Activated T-helper 1 cell treated with anti-CD3 and anti-CD28 coated beads, Interleukin-12 subunit alpha, Interleukin-12 subunit beta, Interleukin-2, Interleukin-4 antibody, amounts not matched to agents 30 ng/mL and 10 ng/mL and 1 ng/mL, durations not matched to agents 14 hours and 24 hours and 36 hours (primary cell): ENCODE measurements at regions of chr14 and their contacts with region 1.

Region 1: DNA sequence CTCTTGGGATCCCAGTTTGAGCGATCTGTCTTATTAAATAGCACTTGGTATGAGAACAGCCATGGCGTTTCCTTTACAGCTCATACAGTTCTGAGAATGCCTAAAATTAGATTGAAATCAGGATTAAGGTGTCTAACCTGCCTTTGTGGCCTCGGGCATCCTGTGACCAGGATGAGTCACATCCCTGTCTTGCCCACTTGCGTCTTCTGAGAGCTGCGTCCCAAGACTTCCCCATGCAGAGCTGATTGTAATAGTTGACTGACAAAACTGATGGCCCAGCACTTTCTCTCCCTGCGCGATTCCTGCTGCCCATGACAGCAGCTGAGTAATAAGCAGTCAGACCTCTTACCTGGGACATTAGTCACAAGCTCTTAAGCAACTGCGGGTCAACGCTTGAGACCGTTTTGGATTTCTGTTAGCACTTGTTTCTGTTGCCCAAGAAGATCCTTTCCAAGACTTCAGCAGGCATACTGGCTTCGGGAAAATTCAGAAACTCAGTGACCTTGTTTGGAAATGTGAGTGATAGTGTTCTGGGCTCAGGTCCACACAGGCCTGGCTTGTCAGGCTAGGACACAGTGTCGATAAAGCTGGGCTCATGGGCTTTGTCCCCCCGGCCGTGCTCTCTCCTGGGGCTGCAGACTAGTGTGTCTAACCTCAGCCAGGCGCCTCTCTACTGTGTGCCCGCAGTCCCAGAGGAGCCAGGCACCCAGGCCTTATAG is 169.9 kb upstream of the HIF1A start:
- DNase-seq: peak; percentile 65
- H3K4me3 Mint-ChIP-seq: peak overlapping the region; percentile 64
- H3K27ac Mint-ChIP-seq: peak overlapping the region; percentile 89
- H3K4me1 Mint-ChIP-seq: peaks cover 82% of the 10 kb centered on the region
- H3K27me3 Mint-ChIP-seq: no peaks in the 10 kb centered on the region

Region 2: DNA sequence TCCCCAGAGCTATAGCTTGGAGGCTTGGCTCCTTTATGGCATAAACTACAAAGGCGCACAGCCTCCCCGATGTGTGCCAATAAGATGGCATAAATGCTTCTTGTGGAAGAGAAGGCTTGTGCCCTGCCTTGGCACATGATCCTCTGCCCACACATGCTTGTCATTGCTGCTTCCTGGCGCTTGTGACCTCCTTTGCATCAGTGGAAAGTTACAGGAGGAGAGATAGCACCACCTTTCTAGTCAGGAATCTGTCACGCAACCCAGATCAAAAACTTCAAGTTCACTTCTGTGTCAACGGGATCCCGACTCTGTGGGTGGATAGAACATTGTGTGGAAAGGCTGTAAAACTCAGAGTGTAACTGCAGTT is 13.9 kb before region 1 on chr14:
- intact Hi-C with region 1: loop called (anchors 1 kb)
- DNase-seq: peak; percentile 13
- H3K4me3 Mint-ChIP-seq: peak overlapping the region; percentile 64
- H3K27ac Mint-ChIP-seq: peak overlapping the region; percentile 88
- H3K4me1 Mint-ChIP-seq: peaks cover 83% of the 10 kb centered on the region
- H3K27me3 Mint-ChIP-seq: no peaks in the 10 kb centered on the region

Region 3: GRCh38 chr14:61553725-61554641 is 28.5 kb after region 1 on chr14:
- intact Hi-C with region 1: loop called (anchors 2 kb)
- DNase-seq: no peak
- H3K4me3 Mint-ChIP-seq: peak overlapping the region; percentile 19
- H3K27ac Mint-ChIP-seq: peak overlapping the region; percentile 84
- H3K4me1 Mint-ChIP-seq: peaks cover 77% of the 10 kb centered on the region
- H3K27me3 Mint-ChIP-seq: no peaks in the 10 kb centered on the region

Region 4: DNA sequence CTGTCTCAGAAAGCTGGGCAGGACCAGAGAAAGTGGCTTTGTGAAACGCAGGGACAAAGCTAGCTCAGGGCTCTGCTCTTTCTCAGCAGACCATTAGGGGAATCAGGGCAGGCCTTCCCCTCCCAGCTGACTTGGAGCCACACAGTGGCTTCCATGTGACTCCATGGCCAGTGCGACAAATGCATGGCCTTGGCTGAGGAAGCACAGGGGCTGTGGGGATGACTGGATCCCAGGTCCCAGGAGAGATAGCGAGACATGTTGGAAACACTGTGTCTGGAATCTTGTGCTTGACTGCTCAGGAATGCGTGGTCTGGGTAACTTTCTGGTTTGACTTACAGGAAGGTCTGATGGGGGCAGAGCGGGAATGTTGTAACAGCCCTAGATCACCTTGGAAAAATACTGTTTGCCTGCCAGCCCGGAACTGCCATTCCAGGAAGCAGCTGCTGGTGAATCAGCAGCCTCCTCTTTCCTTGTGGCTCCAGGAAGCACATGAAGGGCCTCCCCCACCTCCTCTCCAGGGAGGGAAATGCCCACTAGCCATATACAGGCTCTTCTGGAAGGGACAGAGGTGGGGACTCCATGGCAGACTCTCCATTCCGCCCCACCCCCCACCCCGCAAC is 36.3 kb after region 1 on chr14:
- intact Hi-C with region 1: loop called (anchors 2 kb)
- DNase-seq: no peak
- H3K4me3 Mint-ChIP-seq: peak overlapping the region; percentile 37
- H3K27ac Mint-ChIP-seq: peak overlapping the region; percentile 27
- H3K4me1 Mint-ChIP-seq: peaks cover 70% of the 10 kb centered on the region
- H3K27me3 Mint-ChIP-seq: no peaks in the 10 kb centered on the region